ENCODE measurements at regions of chr3 and their contacts with region 1.

Region 1: DNA sequence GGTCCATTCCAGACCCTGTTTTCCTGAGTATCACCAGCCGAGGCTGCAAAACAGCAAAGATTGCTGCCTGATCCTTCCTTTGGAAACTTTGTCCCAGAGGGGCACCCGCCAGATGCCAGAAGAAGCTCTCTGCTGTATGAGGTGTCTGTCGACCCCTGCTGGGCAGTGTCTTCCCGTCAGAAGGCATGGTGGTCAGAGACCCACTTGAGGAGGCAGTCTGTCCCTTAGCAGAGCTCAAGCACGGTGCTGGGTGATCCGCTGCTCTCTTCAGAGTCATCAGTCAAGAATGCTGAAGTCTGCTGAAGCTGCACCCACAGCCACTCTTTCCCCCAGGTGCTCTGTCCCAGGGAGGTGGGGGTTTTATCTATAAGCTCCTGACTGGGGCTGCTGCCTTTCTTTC is 1121.2 kb downstream of the NSUN3 start:
- DNase-seq: no peak
- H3K4me3 Mint-ChIP-seq: no peak overlapping the region
- H3K27ac Mint-ChIP-seq: no peak overlapping the region
- H3K4me1 Mint-ChIP-seq: no peaks in the 10 kb centered on the region
- H3K27me3 Mint-ChIP-seq: no peaks in the 10 kb centered on the region
- CTCF ChIP-seq: no peak

Region 2: GRCh38 chr3:95120921-95121320 is 63.1 kb before region 1 on chr3:
- CTCF ChIA-PET with region 1: no interaction called
- intact Hi-C with region 1: loop called (anchors 10 kb)
- DNase-seq: no peak
- H3K4me3 Mint-ChIP-seq: no peak overlapping the region
- H3K27ac Mint-ChIP-seq: no peak overlapping the region
- H3K4me1 Mint-ChIP-seq: no peaks in the 10 kb centered on the region
- H3K27me3 Mint-ChIP-seq: no peaks in the 10 kb centered on the region
- CTCF ChIP-seq: no peak

Region 3: DNA sequence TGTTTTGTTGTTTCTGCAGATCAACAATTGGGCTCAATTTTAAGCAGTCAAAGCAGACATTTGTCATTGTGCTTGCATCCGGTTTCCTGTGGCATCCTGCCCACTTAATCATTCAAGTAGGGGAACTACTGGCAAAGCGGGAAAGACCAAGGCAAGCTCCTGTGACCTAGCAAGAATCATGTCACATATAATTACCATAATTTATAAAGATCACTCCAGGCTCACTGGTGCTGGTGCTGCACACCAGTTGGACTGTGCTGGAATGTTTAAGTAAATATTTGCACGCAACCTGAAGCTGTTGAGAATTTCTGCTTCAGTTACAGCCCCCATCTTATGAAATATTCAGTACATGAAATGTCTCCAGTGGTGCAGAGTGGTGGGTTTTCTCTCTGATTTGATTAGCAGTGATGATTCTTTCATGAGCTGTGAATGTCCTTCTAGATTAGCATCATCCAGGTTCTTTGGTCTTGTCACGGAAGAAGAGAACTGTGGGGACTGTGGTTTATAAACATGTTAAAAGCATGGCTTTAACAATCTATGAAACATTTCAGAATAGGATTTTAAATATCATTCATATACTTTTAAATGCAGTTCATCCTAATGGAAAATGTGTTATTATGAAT is 1009.0 kb after region 1 on chr3:
- CTCF ChIA-PET with region 1: no interaction called
- intact Hi-C with region 1: no loop called
- DNase-seq: no peak
- H3K4me3 Mint-ChIP-seq: no peak overlapping the region
- H3K27ac Mint-ChIP-seq: no peak overlapping the region
- H3K4me1 Mint-ChIP-seq: no peaks in the 10 kb centered on the region
- H3K27me3 Mint-ChIP-seq: no peaks in the 10 kb centered on the region
- CTCF ChIP-seq: no peak

Measured in Calu3 (cell line).